Right ventricle myocardium inferior (tissue), 1 donor: ENCODE measurements at regions of chr9 and their contacts with region 1.

Region 1: DNA sequence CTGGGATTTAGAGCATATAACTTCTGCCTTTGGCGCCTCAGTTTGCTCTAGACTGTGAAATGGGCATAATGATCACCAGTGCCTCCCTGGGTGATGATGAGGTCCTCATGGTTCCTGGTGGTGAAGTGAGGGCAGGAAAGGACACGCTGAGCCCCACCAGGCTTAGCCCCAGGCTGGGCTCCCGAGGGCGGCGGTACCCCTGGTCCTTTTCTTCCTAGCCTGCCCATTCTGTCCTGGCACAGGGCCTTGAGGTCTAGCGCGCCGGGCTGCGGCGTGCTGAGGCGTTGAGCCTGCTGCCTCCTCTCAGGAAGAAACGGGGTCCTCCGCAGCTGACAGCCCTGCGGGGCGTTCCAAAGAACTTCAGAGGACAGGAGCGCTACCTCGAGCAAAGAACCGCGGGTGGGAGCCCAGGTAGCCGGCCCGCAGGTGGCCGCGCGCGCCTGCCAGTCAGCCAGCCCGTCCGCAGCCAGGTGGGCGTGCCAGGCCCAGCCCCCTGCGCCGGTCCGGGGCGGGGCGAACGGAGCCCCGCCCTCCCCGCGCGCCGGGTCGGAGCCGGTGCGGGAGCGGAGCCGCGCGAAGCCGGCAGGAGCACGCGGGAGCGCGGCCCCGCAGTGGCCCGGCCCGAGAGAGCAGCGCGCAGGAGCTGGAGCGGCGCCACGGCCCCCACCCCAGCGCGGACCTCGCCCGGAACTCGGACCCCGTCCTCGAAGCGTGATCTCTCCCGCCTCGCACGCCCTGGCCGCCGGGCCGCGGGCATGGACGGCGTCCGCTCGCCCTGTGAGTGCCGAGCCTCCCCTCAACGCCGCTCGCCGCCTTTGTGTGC is at the start of gene WNK2:
- DNase-seq: peak; percentile 68
- ATAC-seq: peak; percentile 51
- total RNA-seq, gene WNK2: 200 TPM

Region 2: DNA sequence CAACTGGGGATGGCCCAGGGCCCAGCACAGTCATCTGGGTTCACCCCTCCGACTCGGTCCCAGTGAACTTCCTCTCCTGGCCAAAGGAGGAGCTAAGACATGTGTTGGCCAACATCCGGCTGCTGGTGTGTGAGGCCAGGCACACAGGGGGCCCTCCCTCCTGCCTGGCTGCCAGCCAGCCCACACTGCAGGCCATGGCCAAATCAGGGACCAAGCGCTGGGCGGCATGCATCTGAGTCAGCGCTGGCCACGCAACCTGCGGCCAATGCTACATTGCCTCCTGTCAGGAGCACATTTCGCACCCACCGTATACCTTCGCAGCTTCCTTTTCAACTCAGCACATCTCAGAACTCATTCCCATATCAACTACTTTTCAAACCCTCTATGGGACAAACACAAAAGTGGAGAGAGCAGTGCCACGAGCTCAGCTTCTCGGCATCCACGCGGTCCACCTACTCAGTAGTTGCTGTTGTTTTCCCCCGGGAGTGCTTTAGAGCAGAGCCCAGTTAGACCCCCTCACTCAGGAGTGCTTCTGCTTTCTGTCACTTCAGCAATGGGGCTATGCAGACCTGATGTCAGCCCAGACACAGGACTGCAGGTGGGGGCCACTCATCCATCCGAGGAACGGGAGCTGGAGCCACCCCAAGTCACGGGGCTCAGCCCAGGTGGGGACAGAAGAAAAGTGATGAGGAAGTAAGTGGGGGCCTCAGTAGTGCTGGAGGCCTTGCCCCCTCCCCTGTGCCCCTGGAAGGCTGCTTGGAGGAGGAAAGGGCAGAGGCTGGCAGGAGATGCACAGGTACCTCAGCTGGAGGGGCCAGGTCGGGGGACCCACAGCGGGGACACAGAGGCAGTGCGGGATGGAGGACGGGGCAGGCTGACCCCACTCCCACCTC is 63.6 kb before region 1 on chr9:
- intact Hi-C with region 1: no loop called
- DNase-seq: peak; percentile 98
- ATAC-seq: peak; percentile 90

Region 3: DNA sequence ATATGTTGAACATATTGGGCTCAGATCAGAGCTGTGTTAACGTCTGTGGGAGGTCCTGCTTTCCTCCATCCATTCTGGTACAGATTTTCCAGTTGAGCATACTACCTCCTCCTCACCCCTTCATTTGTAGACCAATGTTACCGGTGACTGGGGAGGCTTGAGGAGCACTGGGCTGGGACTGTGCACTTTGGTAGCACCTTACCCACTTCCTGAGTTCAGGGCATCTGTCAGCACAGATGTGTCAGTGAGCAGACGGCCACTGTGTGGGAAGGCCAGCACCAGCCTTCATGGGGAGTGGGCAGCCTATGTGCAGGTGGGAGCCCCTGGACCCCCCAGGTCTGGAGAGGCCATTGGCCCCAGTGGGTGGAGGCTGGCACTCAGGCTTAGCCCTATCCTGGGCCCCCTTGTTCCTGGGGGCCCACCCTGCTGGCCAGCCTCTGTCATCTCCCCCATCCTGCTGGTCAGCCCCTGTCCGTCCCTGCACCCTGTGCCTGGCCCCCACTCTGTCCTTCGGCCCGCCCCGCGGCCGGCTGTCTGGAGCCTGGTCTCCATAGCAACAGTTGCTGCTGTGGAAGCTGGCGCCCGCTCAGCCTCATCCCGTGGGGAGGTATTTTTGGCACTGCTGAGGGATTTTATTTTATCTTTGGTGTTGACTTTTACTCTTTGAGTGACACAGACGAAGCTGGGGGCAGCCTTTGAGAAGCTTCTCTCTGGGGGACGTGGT is 21.4 kb after region 1 on chr9:
- intact Hi-C with region 1: loop called (anchors 2 kb)
- DNase-seq: peak; percentile 87
- ATAC-seq: peak; percentile 61

Region 4: GRCh38 chr9:93223260-93224180 is 39.7 kb after region 1 on chr9:
- intact Hi-C with region 1: loop called (anchors 5 kb)
- DNase-seq: peak; percentile 63
- ATAC-seq: peak; percentile 74

Region 5: GRCh38 chr9:93245122-93245970 is 61.5 kb after region 1 on chr9:
- intact Hi-C with region 1: loop called (anchors 10 kb)
- DNase-seq: no peak
- ATAC-seq: no peak

Region 6: GRCh38 chr9:93501406-93501805 is 317.6 kb after region 1 on chr9:
- intact Hi-C with region 1: no loop called
- DNase-seq: no peak
- ATAC-seq: no peak